OCI-LY7 (cell line): ENCODE measurements at regions of chr10 and their contacts with region 1.

Region 1: GRCh38 chr10:12412666-12413368 is 63.5 kb downstream of the CAMK1D start:
- DNase-seq: no peak
- H3K4me3 ChIP-seq: no peak overlapping the region
- H3K27ac ChIP-seq: no peak overlapping the region
- H3K4me1 ChIP-seq: no peaks in the 10 kb centered on the region
- CTCF ChIP-seq: no peak

Region 2: GRCh38 chr10:12394236-12395033 is 18.4 kb before region 1 on chr10:
- CTCF ChIA-PET with region 1: no interaction called
- POLR2A ChIA-PET with region 1: interaction called, 10 read pairs
- intact Hi-C with region 1: no loop called
- DNase-seq: no peak
- H3K4me3 ChIP-seq: no peak overlapping the region
- H3K27ac ChIP-seq: no peak overlapping the region
- H3K4me1 ChIP-seq: peaks cover 2% of the 10 kb centered on the region
- CTCF ChIP-seq: no peak